AG04449 (cell line): ENCODE measurements at regions of chr7 and their contacts with region 1.

Region 1: GRCh38 chr7:83936056-83936708 is 258.4 kb downstream of the SEMA3A start:
- DNase-seq: peak; percentile 21
- H3K4me3 ChIP-seq: no peak overlapping the region
- CTCF ChIP-seq: peak; percentile 82

Region 2: DNA sequence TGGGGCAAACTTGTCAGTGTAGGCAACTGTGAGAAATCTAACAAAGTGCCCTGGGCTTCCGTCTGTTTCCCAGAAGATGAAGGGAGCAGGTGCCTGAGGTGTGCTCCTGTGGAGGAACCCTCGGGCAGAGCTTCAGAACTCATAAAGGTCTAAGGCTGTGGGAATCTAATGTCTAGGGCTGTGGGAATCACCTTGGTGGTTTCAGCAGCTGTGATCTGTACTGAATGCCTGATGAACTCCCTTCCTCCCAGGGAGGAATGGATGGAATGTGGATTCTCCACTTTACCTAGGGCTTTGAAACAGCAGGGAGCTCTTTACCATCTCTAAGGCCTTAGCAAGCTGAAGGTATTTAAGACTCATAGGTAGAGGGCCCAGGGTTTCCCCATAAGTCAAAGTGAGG is 251.3 kb before region 1 on chr7:
- CTCF ChIA-PET with region 1: no interaction called
- POLR2A ChIA-PET with region 1: no interaction called
- DNase-seq: no peak
- H3K4me3 ChIP-seq: no peak overlapping the region
- CTCF ChIP-seq: no peak

Region 3: DNA sequence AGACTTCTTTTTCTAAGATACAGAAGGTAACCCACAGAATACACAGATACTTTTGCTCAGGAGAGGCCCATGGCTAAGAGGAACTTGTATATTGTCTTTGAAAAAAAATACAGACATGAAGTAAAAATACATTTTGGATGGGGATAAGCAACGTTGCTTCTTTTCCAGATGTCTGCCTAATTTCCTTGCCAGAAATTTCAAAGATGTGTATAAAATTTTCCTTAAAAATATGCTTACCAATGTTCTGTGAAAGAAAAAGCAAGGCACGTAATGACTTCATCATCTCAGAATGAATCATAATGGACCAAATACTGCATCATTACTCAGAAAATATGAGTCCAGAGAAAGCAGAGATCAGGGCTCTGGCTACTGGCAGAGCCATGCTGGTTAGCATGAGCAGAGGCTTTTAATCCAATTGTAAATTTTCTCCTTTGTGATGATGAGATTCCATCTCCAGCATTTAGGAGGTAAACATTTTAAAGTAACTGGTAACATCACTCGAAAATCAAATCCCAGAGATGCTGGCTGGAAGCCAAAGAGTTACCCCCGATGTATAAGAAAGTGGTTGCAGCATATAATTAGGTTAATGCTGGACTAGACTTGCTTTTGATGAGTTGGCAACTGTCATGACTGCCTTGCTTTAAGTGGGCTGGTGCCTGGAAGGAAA is 14.1 kb before region 1 on chr7:
- CTCF ChIA-PET with region 1: interaction called, 13 read pairs
- POLR2A ChIA-PET with region 1: no interaction called
- DNase-seq: no peak
- H3K4me3 ChIP-seq: no peak overlapping the region
- CTCF ChIP-seq: no peak

Region 4: GRCh38 chr7:83957333-83957732 is 21.2 kb after region 1 on chr7:
- CTCF ChIA-PET with region 1: interaction called, 70 read pairs
- POLR2A ChIA-PET with region 1: no interaction called
- DNase-seq: no peak
- H3K4me3 ChIP-seq: no peak overlapping the region
- CTCF ChIP-seq: no peak

Region 5: GRCh38 chr7:84497873-84498272 is 561.7 kb after region 1 on chr7:
- CTCF ChIA-PET with region 1: no interaction called
- POLR2A ChIA-PET with region 1: no interaction called
- DNase-seq: no peak
- H3K4me3 ChIP-seq: no peak overlapping the region
- CTCF ChIP-seq: no peak

Region 6: GRCh38 chr7:85014936-85015660 is 1078.9 kb after region 1 on chr7:
- CTCF ChIA-PET with region 1: interaction called, 613 read pairs
- POLR2A ChIA-PET with region 1: no interaction called
- DNase-seq: no peak
- H3K4me3 ChIP-seq: no peak overlapping the region
- CTCF ChIP-seq: no peak

Region 7: DNA sequence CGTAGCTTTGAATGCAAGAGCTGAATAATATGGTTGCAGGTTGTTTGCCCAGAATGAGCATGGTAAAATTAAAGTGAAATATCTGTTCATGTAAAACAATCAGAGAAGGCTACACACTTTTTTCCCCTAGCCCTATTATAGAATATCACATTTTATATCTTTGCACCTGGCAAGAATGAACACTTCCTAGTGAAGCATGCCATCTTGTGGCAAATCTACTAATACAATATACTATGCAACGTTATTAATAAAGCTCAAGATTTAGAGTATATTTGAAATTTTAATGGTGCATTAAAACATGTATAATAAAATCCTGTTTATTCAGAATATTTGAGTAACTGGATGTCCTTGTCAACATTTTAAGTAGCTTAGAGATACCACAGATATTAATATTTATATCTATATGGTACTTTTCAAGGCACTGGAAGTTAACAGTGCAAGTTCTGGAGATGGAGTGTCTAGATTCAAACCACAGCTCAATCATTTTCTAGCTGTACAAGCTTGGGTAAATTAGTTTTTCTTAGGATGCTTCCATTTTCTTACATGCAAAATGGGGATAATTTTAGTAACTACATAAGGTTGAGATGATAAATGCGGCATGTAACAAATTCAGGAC is 1893.7 kb after region 1 on chr7:
- CTCF ChIA-PET with region 1: interaction called, 13 read pairs
- POLR2A ChIA-PET with region 1: no interaction called
- DNase-seq: no peak
- H3K4me3 ChIP-seq: no peak overlapping the region
- CTCF ChIP-seq: peak; percentile 17